ENCODE measurements at regions of chr12 and their contacts with region 1.

Region 1: DNA sequence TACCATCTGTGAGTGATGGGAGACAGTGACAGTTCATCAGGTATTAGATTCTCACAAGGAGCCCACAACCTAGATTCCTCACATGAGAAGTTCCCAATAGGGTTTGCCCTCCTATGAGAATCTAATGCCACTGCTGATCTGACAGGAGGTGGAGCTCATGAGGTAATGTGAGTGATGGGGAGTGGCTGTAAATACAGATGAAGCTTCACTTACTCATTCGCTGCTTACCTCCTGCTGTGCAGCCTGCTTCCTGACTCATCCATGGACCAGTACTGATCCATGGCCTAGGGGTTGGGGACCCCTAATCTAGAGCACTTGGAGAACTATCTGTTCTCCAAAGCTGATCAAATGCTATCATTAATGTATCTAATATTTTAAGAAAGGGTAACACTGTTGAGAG is 17.7 kb downstream of the CLEC2D start:
- DNase-seq: peak; percentile 44
- H3K4me3 Mint-ChIP-seq: no peak overlapping the region
- H3K27ac Mint-ChIP-seq: peak overlapping the region; percentile 51
- H3K4me1 Mint-ChIP-seq: peaks cover 66% of the 10 kb centered on the region
- H3K27me3 Mint-ChIP-seq: no peaks in the 10 kb centered on the region

Region 2: DNA sequence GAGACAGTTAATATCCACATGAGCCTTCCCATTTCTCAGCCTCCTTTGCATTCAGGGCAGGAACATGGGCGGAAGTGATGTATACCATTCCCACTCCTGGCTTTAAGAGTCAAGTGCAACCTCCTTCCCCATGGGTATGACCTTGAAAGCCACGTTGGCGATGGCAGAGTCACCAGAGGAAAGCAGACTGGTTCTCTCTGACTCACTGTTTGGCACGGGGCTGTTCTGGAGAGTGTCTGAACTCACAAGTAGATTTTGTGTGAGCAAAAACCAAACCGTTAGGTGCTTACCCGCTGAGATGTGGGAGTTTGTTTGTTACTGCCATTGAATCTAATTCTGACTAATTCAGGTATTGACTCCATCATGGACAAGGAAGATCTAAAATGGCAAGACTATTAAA is 442.3 kb before region 1 on chr12:
- CTCF ChIA-PET with region 1: no interaction called
- POLR2A ChIA-PET with region 1: no interaction called
- intact Hi-C with region 1: no loop called
- DNase-seq: peak; percentile 89
- H3K4me3 Mint-ChIP-seq: peak overlapping the region; percentile 6
- H3K27ac Mint-ChIP-seq: peak overlapping the region; percentile 82
- H3K4me1 Mint-ChIP-seq: peaks cover 52% of the 10 kb centered on the region
- H3K27me3 Mint-ChIP-seq: peaks cover 3% of the 10 kb centered on the region

Region 3: GRCh38 chr12:9634177-9634803 is 52.9 kb before region 1 on chr12:
- CTCF ChIA-PET with region 1: interaction called, 15 read pairs
- POLR2A ChIA-PET with region 1: interaction called, 3 read pairs
- intact Hi-C with region 1: no loop called
- DNase-seq: peak; percentile 81
- H3K4me3 Mint-ChIP-seq: no peak overlapping the region
- H3K27ac Mint-ChIP-seq: peak overlapping the region; percentile 66
- H3K4me1 Mint-ChIP-seq: peaks cover 60% of the 10 kb centered on the region
- H3K27me3 Mint-ChIP-seq: no peaks in the 10 kb centered on the region

Region 4: GRCh38 chr12:9702255-9702654 is 15.0 kb after region 1 on chr12:
- CTCF ChIA-PET with region 1: interaction called, 16 read pairs
- POLR2A ChIA-PET with region 1: interaction called, 5 read pairs
- intact Hi-C with region 1: loop called (anchors 2 kb)
- DNase-seq: peak; percentile 78
- H3K4me3 Mint-ChIP-seq: peak overlapping the region; percentile 66
- H3K27ac Mint-ChIP-seq: peak overlapping the region; percentile 87
- H3K4me1 Mint-ChIP-seq: peaks cover 74% of the 10 kb centered on the region
- H3K27me3 Mint-ChIP-seq: no peaks in the 10 kb centered on the region

Region 5: GRCh38 chr12:9750276-9751203 is 63.3 kb after region 1 on chr12:
- CTCF ChIA-PET with region 1: no interaction called
- POLR2A ChIA-PET with region 1: no interaction called
- intact Hi-C with region 1: no loop called
- DNase-seq: peak; percentile 63
- H3K4me3 Mint-ChIP-seq: peak overlapping the region; percentile 50
- H3K27ac Mint-ChIP-seq: peak overlapping the region; percentile 83
- H3K4me1 Mint-ChIP-seq: peaks cover 51% of the 10 kb centered on the region
- H3K27me3 Mint-ChIP-seq: no peaks in the 10 kb centered on the region

Measured in activated CD4-positive, alpha-beta memory T cell treated with anti-CD3 and anti-CD28 coated beads for 36 hours (primary cell).